ENCODE measurements at regions of chrX and their contacts with region 1.

Region 1: GRCh38 chrX:47523297-47523696 is 37.7 kb upstream of the ARAF start:
- DNase-seq: peak; percentile 77 to 96
- H3K4me3 ChIP-seq: peak overlapping the region; percentile 45
- H3K4me1 ChIP-seq: peaks cover 7% of the 10 kb centered on the region
- H3K27me3 ChIP-seq: no peaks in the 10 kb centered on the region

Region 2: GRCh38 chrX:47193475-47194193 is 329.7 kb before region 1 on chrX and contains the start of gene UBA1:
- in situ Hi-C with region 1: loop called (anchors 5 kb)
- DNase-seq: peak; percentile 94 to 98
- H3K4me3 ChIP-seq: peak within 1 kb of the TSS; percentile 99
- H3K4me1 ChIP-seq: peaks cover 38% of the 10 kb centered on the region
- H3K27me3 ChIP-seq: no peaks in the 10 kb centered on the region

Region 3: GRCh38 chrX:47373198-47373597 is 150.1 kb before region 1 on chrX:
- in situ Hi-C with region 1: loop called (anchors 10 kb)
- DNase-seq: no peak
- H3K4me3 ChIP-seq: no peak overlapping the region
- H3K4me1 ChIP-seq: no peaks in the 10 kb centered on the region
- H3K27me3 ChIP-seq: no peaks in the 10 kb centered on the region

Measured in HAP-1 (cell line).